ENCODE measurements at regions of chr14 and their contacts with region 1.

Region 1: GRCh38 chr14:53055003-53055402 is 98.1 kb downstream of the DDHD1 start:
- DNase-seq: no peak
- H3K4me3 ChIP-seq: no peak overlapping the region
- H3K27ac ChIP-seq: no peak overlapping the region
- H3K4me1 ChIP-seq: no peaks in the 10 kb centered on the region
- H3K27me3 ChIP-seq: no peaks in the 10 kb centered on the region
- CTCF ChIP-seq: peak in 2 of 3 experiments; percentile 52 to 68; a peak in 2 of 4 replicates
- EP300 ChIP-seq: no peak
- POLR2A ChIP-seq: no peak
- RAD21 ChIP-seq: peak; percentile 74 to 79

Region 2: DNA sequence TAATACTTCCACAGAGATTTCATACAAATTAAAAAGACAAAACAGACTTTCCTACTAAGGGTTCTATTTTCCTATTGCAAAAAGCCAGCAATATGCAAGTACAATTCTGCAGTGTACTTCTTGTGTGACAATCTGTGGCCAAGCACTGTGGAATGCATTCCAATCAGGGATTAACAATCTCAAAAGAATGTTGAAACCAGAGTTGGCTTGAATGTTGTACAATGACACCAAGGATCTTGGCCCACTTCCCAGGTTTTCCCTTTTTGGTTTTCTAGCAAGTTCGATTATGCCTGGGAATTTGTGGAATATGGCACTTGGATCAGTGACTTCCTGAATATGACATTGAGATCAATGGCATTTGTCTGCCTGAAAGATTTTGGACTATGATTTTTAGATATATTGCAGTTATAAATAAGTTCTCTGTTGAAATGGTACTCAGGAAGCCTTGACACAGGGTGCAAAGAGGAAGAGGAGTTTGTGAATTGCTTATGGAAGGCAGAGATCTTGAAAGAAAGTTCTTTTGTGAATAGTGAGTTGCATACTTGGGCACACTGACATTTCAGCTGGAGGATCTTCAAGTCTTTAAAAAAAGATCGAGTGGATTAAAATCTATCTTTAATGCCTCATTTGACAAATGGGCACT is 22.7 kb before region 1 on chr14:
- CTCF ChIA-PET with region 1: interaction called, 15 read pairs
- POLR2A ChIA-PET with region 1: no interaction called
- DNase-seq: no peak
- H3K4me3 ChIP-seq: no peak overlapping the region
- H3K27ac ChIP-seq: no peak overlapping the region
- H3K4me1 ChIP-seq: no peaks in the 10 kb centered on the region
- H3K27me3 ChIP-seq: no peaks in the 10 kb centered on the region
- CTCF ChIP-seq: no peak
- EP300 ChIP-seq: no peak
- POLR2A ChIP-seq: no peak
- RAD21 ChIP-seq: no peak

Region 3: DNA sequence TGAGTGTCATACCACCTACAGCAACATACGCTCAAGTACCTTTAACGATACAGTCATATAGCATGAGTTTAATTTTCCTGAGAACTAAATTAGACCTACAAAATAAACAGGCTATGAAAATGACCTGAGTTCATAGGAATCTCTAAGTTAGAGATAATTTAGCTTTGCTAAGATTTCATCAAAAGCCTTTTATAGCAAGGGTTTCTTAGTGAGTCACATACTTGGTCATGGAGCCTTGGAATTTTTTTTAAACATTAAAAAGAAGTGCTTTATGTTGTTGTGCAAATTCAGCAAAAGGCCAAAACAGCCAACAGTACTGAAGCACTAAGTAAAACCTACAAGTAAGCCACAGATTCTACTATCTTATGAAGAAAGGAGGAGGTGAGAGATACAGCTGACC is 10.5 kb before region 1 on chr14:
- CTCF ChIA-PET with region 1: interaction called, 15 read pairs
- POLR2A ChIA-PET with region 1: no interaction called
- DNase-seq: no peak
- H3K4me3 ChIP-seq: no peak overlapping the region
- H3K27ac ChIP-seq: no peak overlapping the region
- H3K4me1 ChIP-seq: no peaks in the 10 kb centered on the region
- H3K27me3 ChIP-seq: no peaks in the 10 kb centered on the region
- CTCF ChIP-seq: no peak
- EP300 ChIP-seq: no peak
- POLR2A ChIP-seq: no peak
- RAD21 ChIP-seq: no peak